MCF 10A (cell line): ENCODE measurements at regions of chr1 and their contacts with region 1.

Region 1: DNA sequence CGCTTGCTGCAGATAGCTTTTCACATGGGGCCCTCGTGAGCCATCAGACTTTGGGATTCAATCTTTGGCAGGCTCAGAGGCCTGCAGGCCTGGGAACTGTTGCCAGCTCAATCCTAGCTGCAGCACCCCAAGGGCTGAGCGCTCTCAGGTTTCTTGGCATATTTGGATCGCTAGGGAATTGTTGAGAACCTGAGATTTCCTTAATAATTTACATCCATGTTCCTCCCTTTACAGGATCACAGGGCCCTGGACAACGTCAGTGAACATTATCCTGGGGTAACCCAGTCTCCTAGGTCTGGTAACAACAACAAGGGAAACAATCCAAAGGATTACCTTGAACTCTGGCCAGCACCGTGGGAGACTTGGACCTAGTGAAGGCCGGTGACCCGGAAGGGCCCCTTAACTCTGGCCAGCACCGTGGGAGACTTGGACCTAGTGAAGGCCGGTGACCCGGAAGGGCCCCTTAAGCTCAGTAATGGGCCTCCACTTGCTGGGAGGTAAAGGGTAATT is 49.3 kb upstream of the NEK2 start:
- DNase-seq: no peak
- H3K4me3 Mint-ChIP-seq: no peak overlapping the region
- H3K27ac Mint-ChIP-seq: no peak overlapping the region
- H3K4me1 Mint-ChIP-seq: no peaks in the 10 kb centered on the region
- H3K27me3 Mint-ChIP-seq: no peaks in the 10 kb centered on the region
- CTCF ChIP-seq: no peak

Region 2: GRCh38 chr1:211705467-211706091 is 19.2 kb before region 1 on chr1:
- CTCF ChIA-PET with region 1: interaction called, 11 read pairs
- POLR2A ChIA-PET with region 1: interaction called, 4 read pairs
- intact Hi-C with region 1: no loop called
- DNase-seq: peak; percentile 83
- H3K4me3 Mint-ChIP-seq: peak overlapping the region; percentile 4
- H3K27ac Mint-ChIP-seq: peak overlapping the region; percentile 7
- H3K4me1 Mint-ChIP-seq: peaks cover 14% of the 10 kb centered on the region
- H3K27me3 Mint-ChIP-seq: no peaks in the 10 kb centered on the region
- CTCF ChIP-seq: no peak